Transverse colon (tissue), 4 donors: ENCODE measurements at regions of chr4 and their contacts with region 1.

Region 1: GRCh38 chr4:156638925-156639605 is 332.5 kb downstream of the PDGFC start:
- DNase-seq: no peak
- H3K4me3 ChIP-seq: no peak overlapping the region
- H3K27ac ChIP-seq: no peak overlapping the region
- H3K4me1 ChIP-seq: no peaks in the 10 kb centered on the region
- H3K27me3 ChIP-seq: no peaks in the 10 kb centered on the region
- CTCF ChIP-seq: no peak
- EP300 ChIP-seq: no peak
- POLR2A ChIP-seq: no peak

Region 2: DNA sequence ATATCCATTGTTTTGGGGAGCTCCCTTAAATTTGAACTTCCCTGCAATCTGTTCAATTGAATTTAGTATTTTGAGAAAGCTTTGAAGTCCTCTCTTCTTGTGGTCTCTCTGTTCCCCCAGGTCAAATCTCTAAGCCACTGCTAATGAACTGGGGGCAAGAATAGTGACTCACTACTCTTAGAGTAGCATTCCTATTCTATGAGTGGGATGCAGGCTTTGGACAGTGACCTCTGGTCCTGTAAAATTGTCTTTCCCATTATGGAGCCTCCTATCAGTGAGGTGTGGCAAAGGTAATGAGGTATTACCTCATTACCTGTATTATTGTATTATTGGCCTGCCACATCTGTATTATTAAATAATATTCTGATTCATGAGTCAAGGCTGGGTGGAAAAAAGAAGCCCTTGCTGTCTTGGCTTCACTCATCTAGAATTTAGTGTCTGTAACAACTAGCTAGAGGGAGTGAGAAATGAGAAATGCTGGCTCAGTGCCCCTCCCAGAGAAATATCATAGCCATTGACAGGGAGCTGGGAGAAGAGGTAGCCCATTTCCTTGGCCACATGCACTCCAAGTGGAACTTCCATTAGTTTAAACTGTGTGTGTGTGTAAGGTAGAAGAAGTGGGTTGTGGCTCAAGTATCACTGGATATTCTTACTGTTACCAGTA is 291.5 kb before region 1 on chr4:
- in situ Hi-C with region 1: no loop called
- intact Hi-C with region 1: no loop called
- DNase-seq: no peak
- H3K4me3 ChIP-seq: no peak overlapping the region
- H3K27ac ChIP-seq: no peak overlapping the region
- H3K4me1 ChIP-seq: peaks cover 0 to 3% (median 0%) of the 10 kb centered on the region in 4 donors
- H3K27me3 ChIP-seq: no peaks in the 10 kb centered on the region
- CTCF ChIP-seq: no peak
- EP300 ChIP-seq: no peak
- POLR2A ChIP-seq: no peak

Region 3: GRCh38 chr4:156734965-156735895 is 96.2 kb after region 1 on chr4:
- in situ Hi-C with region 1: loop called in 1 of 4 experiments (anchors 25 kb)
- intact Hi-C with region 1: no loop called
- DNase-seq: no peak
- H3K4me3 ChIP-seq: no peak overlapping the region
- H3K27ac ChIP-seq: no peak overlapping the region
- H3K4me1 ChIP-seq: no peaks in the 10 kb centered on the region
- H3K27me3 ChIP-seq: no peaks in the 10 kb centered on the region
- CTCF ChIP-seq: no peak
- EP300 ChIP-seq: no peak
- POLR2A ChIP-seq: no peak

Region 4: DNA sequence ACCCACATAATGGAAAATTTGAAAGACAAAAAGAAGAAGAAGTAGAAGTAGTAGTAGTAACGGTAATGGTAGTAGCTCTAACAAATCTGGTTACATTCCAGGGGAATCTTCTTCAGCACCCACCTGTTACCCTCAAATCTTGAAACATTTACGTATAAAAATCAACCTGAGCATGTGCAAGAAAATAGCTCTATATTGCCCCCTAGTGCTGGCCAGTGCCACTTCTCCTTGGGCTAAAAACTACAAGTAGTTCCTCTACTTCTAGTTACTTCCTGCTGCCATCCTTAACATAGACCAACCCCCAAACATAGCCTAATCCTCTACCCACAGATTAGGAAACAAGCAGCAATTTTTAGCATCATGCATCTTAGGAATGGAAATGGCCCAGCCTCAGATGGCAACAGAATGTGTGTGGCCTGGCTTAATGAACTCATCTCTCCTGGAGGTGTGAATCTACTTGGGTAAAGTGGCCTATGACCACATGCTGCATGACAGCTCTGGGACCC is 329.5 kb after region 1 on chr4:
- in situ Hi-C with region 1: no loop called
- intact Hi-C with region 1: no loop called
- DNase-seq: peak; percentile 70
- H3K4me3 ChIP-seq: peak overlapping the region in 1 of 4 donors; percentile 70
- H3K27ac ChIP-seq: peak overlapping the region; percentile 85 to 92 (median 88)
- H3K4me1 ChIP-seq: peaks cover 5 to 26% (median 13%) of the 10 kb centered on the region in 4 donors
- H3K27me3 ChIP-seq: no peaks in the 10 kb centered on the region
- CTCF ChIP-seq: peak; percentile 69 to 86 (median 78)
- EP300 ChIP-seq: no peak
- POLR2A ChIP-seq: no peak